ENCODE measurements at regions of chr3 and their contacts with region 1.

Region 1: DNA sequence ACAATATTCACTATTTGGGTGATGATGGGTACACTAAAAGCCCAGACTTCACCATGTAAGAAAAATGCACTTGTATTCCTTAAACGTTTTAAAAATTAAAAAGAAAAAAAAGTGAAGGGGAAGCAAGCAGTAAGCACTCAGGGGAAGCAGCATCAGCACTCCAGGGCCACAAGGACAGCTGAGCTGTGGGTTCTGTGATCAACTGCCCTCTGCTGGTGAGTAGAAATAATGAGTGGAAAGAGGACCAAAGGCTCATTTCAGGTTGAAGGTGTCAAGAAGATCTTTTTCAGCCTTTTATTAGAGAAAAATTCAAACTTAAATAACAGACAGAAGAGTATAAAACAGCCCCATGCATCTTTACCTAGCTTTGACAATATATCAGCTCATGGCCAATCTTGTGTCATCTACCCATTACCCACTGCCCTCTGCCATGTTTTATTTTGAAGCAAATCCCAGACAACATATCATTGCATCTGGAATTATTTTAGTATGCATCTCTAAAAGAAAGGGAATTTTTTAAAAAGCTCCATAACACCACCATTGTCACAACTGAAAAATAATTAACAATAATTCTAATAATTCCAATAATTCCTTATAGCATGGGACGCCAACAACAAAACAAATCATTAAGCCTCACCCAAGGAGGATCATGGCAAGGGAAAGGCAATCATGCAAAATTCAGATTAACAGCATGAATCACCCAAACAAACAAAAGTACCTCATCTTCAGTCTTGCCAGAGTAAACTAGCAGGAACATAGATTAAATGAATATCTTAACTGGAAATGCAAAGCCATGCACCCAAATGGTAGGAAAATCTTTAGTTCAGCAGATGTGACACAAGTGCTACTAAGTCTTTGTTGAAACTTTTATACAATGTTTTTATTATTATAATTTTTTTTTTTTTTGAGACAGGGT is 42.5 kb downstream of the TAMM41 start:
- DNase-seq: peak; percentile 41 to 58 (median 44)
- H3K4me3 ChIP-seq: no peak overlapping the region
- H3K4me3 Mint-ChIP-seq: no peak overlapping the region
- H3K27ac ChIP-seq: no peak overlapping the region
- H3K27ac Mint-ChIP-seq: no peak overlapping the region
- H3K4me1 ChIP-seq: no peaks in the 10 kb centered on the region
- H3K4me1 Mint-ChIP-seq: peaks cover 0 to 24% (median 4%) of the 10 kb centered on the region in 4 donors
- H3K27me3 ChIP-seq: no peaks in the 10 kb centered on the region
- H3K27me3 Mint-ChIP-seq: no peaks in the 10 kb centered on the region

Region 2: DNA sequence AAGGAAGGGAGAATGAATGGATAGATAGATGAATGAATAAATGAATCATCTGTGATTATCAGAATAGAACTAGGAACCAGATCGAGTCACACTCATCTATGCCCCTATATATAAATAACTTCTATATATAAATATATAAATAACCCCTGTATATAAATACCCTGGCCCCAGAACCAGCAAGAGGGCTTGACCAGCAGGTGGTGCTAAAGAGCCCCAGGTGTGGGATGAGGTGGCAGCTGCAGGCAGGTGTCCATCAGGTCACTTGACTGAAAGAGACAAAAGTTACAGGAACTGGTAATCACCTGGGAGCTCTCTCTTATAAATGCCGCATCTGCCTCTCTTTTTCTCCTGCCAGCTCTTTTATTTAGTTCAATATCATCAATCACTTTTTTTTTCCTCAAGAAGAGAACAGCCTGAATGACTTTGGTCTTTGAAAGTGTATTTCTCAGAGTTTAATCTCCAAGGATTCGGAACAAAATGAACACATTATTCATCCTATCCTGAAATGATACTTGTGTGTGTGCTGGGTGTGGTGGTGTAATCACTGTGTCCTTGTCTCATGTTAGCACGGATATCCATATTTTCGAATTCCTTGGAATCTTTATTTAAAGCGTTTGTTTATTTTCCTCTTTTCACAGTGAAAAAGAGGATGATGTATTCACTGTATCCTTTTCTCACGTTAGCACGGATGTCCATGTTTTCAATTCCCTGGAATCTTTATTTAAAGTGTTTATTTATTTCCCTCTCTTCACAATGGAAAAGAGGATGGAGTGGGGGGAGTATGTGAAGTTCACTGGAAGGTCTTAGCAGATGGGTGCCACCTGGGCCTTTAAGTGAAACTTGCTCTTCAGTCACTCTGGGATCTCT is 567.4 kb before region 1 on chr3:
- CTCF ChIA-PET with region 1: interaction called, 3 read pairs
- POLR2A ChIA-PET with region 1: no interaction called
- intact Hi-C with region 1: loop called (anchors 2 kb)
- DNase-seq: peak; percentile 67 to 72 (median 70)
- H3K4me3 ChIP-seq: no peak overlapping the region
- H3K4me3 Mint-ChIP-seq: no peak overlapping the region
- H3K27ac ChIP-seq: no peak overlapping the region
- H3K27ac Mint-ChIP-seq: no peak overlapping the region
- H3K4me1 ChIP-seq: no peaks in the 10 kb centered on the region
- H3K4me1 Mint-ChIP-seq: peaks cover 0 to 2% (median 0%) of the 10 kb centered on the region in 4 donors
- H3K27me3 ChIP-seq: no peaks in the 10 kb centered on the region
- H3K27me3 Mint-ChIP-seq: peaks cover 4 to 8% of the 10 kb centered on the region in 2 donors

Region 3: DNA sequence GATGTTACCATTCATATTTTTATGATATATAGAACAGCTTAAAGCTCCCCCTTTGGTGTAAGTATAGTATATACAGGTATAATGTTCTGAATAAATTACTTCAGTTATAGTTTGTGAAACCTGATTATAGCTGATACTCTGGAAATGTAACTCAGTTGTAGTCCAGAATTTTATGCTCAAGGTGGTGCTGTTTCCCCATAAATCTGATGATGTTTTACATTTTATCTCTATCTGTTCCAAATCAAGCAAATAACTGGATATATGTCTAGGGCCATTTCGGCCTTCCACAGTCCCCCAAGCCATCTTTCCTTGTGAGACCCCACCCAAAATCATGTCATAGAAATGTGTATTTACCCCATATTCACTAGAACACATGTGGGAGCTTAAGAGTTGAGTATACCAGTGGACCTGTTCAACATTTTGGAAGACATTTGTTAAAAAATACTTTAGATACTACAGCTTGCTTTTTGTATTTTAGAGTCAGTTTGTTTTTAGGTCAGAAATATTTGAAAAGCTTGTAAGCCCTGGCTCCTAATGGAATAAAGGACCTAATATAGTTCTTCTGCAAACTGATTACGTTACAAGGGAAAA is 424.9 kb before region 1 on chr3:
- CTCF ChIA-PET with region 1: interaction called, 41 read pairs
- POLR2A ChIA-PET with region 1: no interaction called
- intact Hi-C with region 1: loop called (anchors 1 kb)
- DNase-seq: peak in 4 of 5 donors; percentile 30 to 41 (median 34)
- H3K4me3 ChIP-seq: no peak overlapping the region
- H3K4me3 Mint-ChIP-seq: no peak overlapping the region
- H3K27ac ChIP-seq: no peak overlapping the region
- H3K27ac Mint-ChIP-seq: no peak overlapping the region
- H3K4me1 ChIP-seq: no peaks in the 10 kb centered on the region
- H3K4me1 Mint-ChIP-seq: no peaks in the 10 kb centered on the region
- H3K27me3 ChIP-seq: no peaks in the 10 kb centered on the region
- H3K27me3 Mint-ChIP-seq: no peaks in the 10 kb centered on the region

Region 4: GRCh38 chr3:11680509-11680908 is 123.7 kb before region 1 on chr3:
- CTCF ChIA-PET with region 1: no interaction called
- POLR2A ChIA-PET with region 1: no interaction called
- intact Hi-C with region 1: no loop called
- DNase-seq: no peak
- H3K4me3 ChIP-seq: no peak overlapping the region
- H3K4me3 Mint-ChIP-seq: no peak overlapping the region
- H3K27ac ChIP-seq: no peak overlapping the region
- H3K27ac Mint-ChIP-seq: peak overlapping the region in 1 of 7 donors; percentile 63
- H3K4me1 ChIP-seq: no peaks in the 10 kb centered on the region
- H3K4me1 Mint-ChIP-seq: peaks cover 0 to 4% (median 0%) of the 10 kb centered on the region in 4 donors
- H3K27me3 ChIP-seq: no peaks in the 10 kb centered on the region
- H3K27me3 Mint-ChIP-seq: no peaks in the 10 kb centered on the region

Region 5: GRCh38 chr3:11791339-11792128 is 12.7 kb before region 1 on chr3:
- CTCF ChIA-PET with region 1: interaction called, 15 read pairs
- POLR2A ChIA-PET with region 1: no interaction called
- intact Hi-C with region 1: no loop called
- DNase-seq: no peak
- H3K4me3 ChIP-seq: no peak overlapping the region
- H3K4me3 Mint-ChIP-seq: peak overlapping the region in 1 of 8 donors; percentile 33
- H3K27ac ChIP-seq: no peak overlapping the region
- H3K27ac Mint-ChIP-seq: peak overlapping the region in 2 of 7 donors; percentile 22 to 57
- H3K4me1 ChIP-seq: no peaks in the 10 kb centered on the region
- H3K4me1 Mint-ChIP-seq: peaks cover 0 to 8% (median under 1%) of the 10 kb centered on the region in 4 donors
- H3K27me3 ChIP-seq: no peaks in the 10 kb centered on the region
- H3K27me3 Mint-ChIP-seq: no peaks in the 10 kb centered on the region

Region 6: DNA sequence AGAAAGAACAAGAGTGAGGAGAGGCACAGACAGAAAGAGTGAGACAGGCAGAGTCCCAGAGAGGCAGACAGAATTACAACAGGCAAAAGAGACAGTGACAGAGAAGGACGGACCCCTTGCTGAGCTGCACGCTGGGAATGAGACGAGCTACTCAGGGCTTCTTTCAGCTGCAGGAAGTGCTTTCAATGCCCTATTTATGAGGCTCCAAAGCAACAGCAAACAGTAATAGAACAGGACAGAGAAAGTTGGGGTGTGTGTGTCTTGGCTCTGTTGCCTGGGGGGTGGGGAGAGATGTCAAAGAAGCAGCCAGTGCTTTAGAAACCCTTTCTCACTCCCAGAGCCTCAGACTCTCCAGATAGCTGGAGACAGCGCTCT is 355.0 kb after region 1 on chr3:
- CTCF ChIA-PET with region 1: no interaction called
- POLR2A ChIA-PET with region 1: no interaction called
- intact Hi-C with region 1: no loop called
- DNase-seq: no peak
- H3K4me3 ChIP-seq: no peak overlapping the region
- H3K4me3 Mint-ChIP-seq: no peak overlapping the region
- H3K27ac ChIP-seq: no peak overlapping the region
- H3K27ac Mint-ChIP-seq: no peak overlapping the region
- H3K4me1 ChIP-seq: no peaks in the 10 kb centered on the region
- H3K4me1 Mint-ChIP-seq: peaks cover 0 to 2% (median 0%) of the 10 kb centered on the region in 4 donors
- H3K27me3 ChIP-seq: no peaks in the 10 kb centered on the region
- H3K27me3 Mint-ChIP-seq: peaks cover 4 to 12% of the 10 kb centered on the region in 2 donors

Measured in CD4-positive, alpha-beta memory T cell (primary cell).